ENCODE measurements at regions of chr2 and their contacts with region 1.

Region 1: DNA sequence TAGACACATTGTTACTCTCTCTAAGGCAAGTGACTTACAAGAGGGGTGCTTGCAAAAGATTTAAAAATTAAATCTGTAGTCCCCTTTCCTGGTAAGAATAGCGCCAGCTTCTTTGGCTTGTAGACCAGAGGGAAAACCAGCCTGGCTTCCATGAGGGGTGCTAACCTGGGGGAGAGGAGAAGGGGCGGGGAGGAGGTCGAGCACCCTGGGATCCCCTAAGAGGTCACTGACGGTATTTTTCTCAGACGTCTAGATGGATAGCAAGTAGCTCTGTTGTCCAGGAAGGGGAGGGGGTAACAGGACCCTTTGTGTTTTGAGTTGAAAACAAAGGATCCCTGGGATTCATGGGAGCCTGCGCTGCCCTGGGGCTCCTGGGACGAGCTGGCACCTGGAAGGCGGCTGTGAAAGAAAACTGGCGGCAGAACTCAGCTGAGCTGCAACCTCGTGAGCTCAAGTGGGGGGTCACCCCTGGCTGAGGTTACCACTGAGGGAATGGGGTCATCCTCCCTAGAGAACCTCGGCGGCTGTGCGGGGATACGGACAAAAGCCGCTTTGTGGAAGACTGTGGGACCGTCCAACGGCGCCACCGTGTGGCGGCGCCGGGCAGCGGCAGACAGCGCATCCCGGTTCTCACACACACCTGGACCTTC is 37.8 kb upstream of the MRPL19 start:
- DNase-seq: peak; percentile 25 to 56 (median 44)
- H3K4me3 ChIP-seq: peak overlapping the region in 1 of 7 experiments; percentile 42
- H3K27ac ChIP-seq: no peak overlapping the region
- H3K4me1 ChIP-seq: peaks cover 0 to 3% (median 2%) of the 10 kb centered on the region in 4 experiments
- H3K27me3 ChIP-seq: peaks cover 0 to 61% (median 33%) of the 10 kb centered on the region in 5 experiments

Region 2: GRCh38 chr2:75157430-75157829 is 451.4 kb before region 1 on chr2:
- CTCF ChIA-PET with region 1: interaction called, 16 read pairs
- POLR2A ChIA-PET with region 1: no interaction called
- DNase-seq: peak; percentile 11 to 35 (median 32)
- H3K4me3 ChIP-seq: no peak overlapping the region
- H3K27ac ChIP-seq: no peak overlapping the region
- H3K4me1 ChIP-seq: no peaks in the 10 kb centered on the region
- H3K27me3 ChIP-seq: no peaks in the 10 kb centered on the region

Region 3: DNA sequence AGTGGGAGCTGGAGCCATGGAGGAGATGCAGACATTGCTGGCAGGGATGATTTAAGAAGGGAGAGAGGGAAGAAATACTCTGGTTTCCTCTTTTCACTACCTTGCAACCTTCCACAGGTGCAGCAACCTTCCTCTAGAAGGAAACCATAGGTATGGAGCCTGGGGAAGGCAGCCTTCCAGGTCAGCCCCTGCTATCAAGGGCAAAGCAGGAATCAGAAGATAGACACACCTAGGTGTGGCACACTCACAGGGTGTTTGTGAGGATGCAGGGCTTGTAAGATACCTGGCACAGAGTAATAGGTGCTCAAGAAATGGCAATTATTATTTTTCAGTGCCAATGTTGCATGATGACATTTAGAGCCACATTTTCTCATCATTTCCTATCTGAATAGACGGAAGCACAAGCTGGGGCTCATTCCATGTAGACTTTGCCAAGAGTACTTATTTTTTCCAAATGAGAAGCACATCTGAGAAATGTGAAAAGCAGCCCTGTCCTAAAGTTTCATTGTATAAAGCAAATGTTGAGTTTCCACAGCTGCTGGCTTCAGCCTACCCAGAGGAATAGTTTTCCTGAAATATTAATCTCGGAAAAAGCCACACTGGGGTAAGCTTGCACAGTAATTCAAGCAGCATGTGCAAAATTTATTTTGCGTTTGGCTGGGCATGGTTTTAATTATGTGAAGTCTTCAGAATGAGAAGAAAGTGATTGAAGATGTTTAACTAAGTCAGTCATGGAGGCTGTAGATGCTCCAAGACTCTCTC is 68.7 kb before region 1 on chr2:
- CTCF ChIA-PET with region 1: no interaction called
- POLR2A ChIA-PET with region 1: no interaction called
- DNase-seq: no peak
- H3K4me3 ChIP-seq: no peak overlapping the region
- H3K27ac ChIP-seq: no peak overlapping the region
- H3K4me1 ChIP-seq: no peaks in the 10 kb centered on the region
- H3K27me3 ChIP-seq: peaks cover 0 to 7% (median 0%) of the 10 kb centered on the region in 5 experiments

Region 4: DNA sequence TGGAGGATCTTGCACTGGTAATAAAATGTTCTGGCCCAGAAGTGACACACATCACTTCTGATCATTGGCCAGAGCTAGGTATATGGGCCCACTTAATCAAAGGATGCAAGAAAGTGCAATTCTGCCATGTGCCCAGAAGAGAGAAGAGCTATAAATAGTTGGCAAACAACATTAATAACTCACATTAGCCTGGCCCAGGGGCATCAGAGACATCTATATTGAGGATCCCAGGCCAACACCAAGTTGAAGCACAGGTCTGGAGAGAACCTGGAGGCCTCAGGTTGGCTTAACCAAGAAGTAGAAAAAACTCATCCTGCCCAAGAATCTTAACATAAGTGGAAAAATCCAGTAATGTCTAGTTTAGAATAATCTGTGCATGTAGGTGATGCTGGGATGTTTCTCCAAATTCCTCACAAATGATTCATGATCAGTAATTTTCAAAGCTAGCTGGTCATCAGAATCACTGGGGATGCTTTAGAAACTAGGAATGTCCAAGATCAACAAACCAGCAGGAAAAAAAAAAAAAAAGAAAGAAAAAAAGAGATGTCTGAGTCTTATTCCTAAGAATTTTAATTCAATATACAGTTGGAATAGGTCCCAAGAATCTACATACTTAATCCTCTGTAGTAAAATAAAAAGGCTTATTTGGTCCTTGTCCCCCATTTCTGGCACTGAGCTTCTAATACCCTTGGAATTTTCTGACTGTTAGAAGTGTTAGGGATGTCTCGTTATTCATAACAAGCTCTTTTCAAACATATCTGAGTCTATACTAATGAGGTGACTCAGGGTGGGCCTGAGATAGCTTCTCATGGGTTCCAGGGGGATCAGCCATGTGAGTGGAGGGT is 13.0 kb before region 1 on chr2:
- CTCF ChIA-PET with region 1: interaction called, 17 read pairs
- POLR2A ChIA-PET with region 1: no interaction called
- DNase-seq: no peak
- H3K4me3 ChIP-seq: no peak overlapping the region
- H3K27ac ChIP-seq: no peak overlapping the region
- H3K4me1 ChIP-seq: peaks cover 0 to 3% (median 1%) of the 10 kb centered on the region in 4 experiments
- H3K27me3 ChIP-seq: no peaks in the 10 kb centered on the region

Region 5: DNA sequence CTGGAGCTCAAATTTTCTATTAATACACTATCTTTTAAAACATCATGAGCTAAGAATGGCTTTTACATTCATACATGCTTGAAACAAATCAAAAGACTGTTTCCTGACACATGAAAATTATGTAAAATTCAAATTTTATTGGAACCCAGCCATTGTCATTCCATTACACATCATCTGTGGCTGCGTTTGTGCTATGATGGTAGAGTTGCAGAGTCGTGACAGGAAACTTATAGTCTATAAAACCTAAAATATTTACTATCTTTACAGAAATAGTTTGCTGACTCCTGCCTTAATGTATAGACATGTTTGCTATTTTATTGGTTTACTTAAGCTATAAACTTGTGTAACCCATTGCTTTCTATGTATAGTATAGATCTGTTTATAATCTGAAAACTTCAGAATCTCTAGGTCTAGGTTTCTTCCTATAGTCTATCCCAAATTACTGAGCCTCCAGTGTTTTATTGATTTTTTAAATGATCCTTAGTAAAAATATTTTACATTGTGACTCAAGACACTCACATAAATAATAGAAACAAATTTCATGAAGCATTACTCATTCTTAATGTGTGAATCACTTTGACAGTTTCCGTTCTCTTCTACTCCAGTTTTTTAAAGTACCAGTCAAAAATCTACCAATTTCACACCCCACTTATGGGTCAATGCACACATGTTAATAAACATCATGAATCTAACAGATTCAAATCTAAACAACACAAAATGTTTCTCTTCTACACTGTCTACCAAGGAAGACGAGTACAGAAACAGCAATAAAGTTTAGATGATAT is 11.3 kb after region 1 on chr2:
- CTCF ChIA-PET with region 1: interaction called, 10 read pairs
- POLR2A ChIA-PET with region 1: no interaction called
- DNase-seq: no peak
- H3K4me3 ChIP-seq: no peak overlapping the region
- H3K27ac ChIP-seq: no peak overlapping the region
- H3K4me1 ChIP-seq: peaks cover 0 to 2% (median 0%) of the 10 kb centered on the region in 4 experiments
- H3K27me3 ChIP-seq: peaks cover 0 to 4% (median 1%) of the 10 kb centered on the region in 5 experiments

Region 6: DNA sequence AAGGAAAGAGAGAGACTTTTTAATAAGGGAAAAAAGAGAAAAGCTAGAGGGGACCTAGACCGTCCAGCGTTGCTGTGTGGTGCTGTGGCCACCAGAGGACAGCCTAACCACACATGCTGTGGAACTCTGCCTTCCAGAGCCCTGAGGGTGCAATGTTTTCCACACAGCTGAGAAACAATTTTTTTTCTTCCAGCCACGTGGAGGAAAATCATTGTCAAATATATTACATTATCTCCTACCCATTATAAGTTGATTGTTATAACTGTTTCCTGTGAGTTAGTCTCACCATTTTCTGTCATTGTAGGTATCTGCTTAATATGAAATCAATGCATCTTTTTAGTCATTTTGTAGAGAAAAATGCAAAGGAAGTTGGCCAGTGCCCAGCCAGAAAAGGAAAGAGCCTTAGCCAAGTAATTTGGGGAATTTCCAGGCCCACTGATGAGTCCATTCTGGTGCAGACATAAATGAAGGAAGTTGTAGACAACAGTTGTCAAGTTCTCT is 31.9 kb after region 1 on chr2:
- CTCF ChIA-PET with region 1: no interaction called
- POLR2A ChIA-PET with region 1: no interaction called
- DNase-seq: peak; percentile 31 to 66 (median 54)
- H3K4me3 ChIP-seq: no peak overlapping the region
- H3K27ac ChIP-seq: no peak overlapping the region
- H3K4me1 ChIP-seq: no peaks in the 10 kb centered on the region
- H3K27me3 ChIP-seq: peaks cover 0 to 11% (median 2%) of the 10 kb centered on the region in 5 experiments